K562 (cell line): ENCODE measurements at regions of chr20 and their contacts with region 1.

Region 1: GRCh38 chr20:40797425-40797824 is 108.4 kb upstream of the MAFB start:
- DNase-seq: peak in 2 of 4 experiments; percentile 29 to 31
- ATAC-seq: peak; percentile 81
- H3K4me3 ChIP-seq: no peak overlapping the region
- H3K27ac ChIP-seq: no peak overlapping the region
- H3K4me1 ChIP-seq: no peaks in the 10 kb centered on the region
- H3K27me3 ChIP-seq: no peaks in the 10 kb centered on the region
- CTCF ChIP-seq: peak; percentile 43 to 66 (median 61); a peak in 5 of 6 replicates
- EP300 ChIP-seq: no peak
- POLR2A ChIP-seq: no peak
- RAD21 ChIP-seq: peak in 1 of 2 experiments; percentile 50; a peak in 2 of 4 replicates

Region 2: GRCh38 chr20:40945754-40946450 is 148.5 kb after region 1 on chr20:
- CTCF ChIA-PET with region 1: no interaction called
- POLR2A ChIA-PET with region 1: no interaction called
- in situ Hi-C with region 1: no loop called
- intact Hi-C with region 1: loop called (anchors 2 kb)
- DNase-seq: peak in 2 of 4 experiments; percentile 57 to 59
- ATAC-seq: peak; percentile 94
- H3K4me3 ChIP-seq: no peak overlapping the region
- H3K27ac ChIP-seq: no peak overlapping the region
- H3K4me1 ChIP-seq: peaks cover 3 to 9% of the 10 kb centered on the region in 2 experiments; a peak in 2 of 5 replicates
- H3K27me3 ChIP-seq: peaks cover 20 to 42% of the 10 kb centered on the region in 2 experiments
- CTCF ChIP-seq: peak; percentile 70 to 83 (median 74)
- EP300 ChIP-seq: no peak
- POLR2A ChIP-seq: no peak
- RAD21 ChIP-seq: peak; percentile 54 to 78